ENCODE measurements at regions of chr2 and their contacts with region 1.

Region 1: GRCh38 chr2:181685150-181685688 is 4.9 kb upstream of the NEUROD1 start:
- DNase-seq: no peak
- H3K4me3 ChIP-seq: no peak overlapping the region
- H3K27ac ChIP-seq: no peak overlapping the region
- H3K27me3 ChIP-seq: peaks cover 60% of the 10 kb centered on the region
- CTCF ChIP-seq: no peak

Region 2: DNA sequence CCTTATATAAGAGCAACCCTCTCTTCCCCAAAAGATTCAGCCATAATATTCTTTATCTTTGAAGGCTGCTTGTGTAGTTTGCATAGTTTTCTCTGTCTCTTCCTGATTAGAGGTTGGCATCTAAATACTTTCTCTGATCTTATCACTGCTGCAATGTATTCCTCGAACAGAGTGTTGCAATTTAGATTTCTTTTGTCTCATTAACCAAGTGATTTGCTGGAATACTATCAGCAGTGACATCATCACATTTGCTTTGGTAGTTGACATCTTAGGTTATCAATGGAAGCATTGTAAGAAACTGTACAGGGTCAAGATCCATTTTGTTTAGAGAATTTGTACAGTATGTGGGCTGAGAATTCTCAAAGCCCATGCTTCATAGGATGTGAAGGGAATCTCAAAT is 67.1 kb after region 1 on chr2:
- CTCF ChIA-PET with region 1: interaction called, 13 read pairs
- POLR2A ChIA-PET with region 1: no interaction called
- DNase-seq: no peak
- H3K4me3 ChIP-seq: no peak overlapping the region
- H3K27ac ChIP-seq: no peak overlapping the region
- H3K27me3 ChIP-seq: no peaks in the 10 kb centered on the region
- CTCF ChIP-seq: no peak